ENCODE measurements at regions of chr1 and their contacts with region 1.

Region 1: GRCh38 chr1:26602378-26602959 is 72.9 kb downstream of the RPS6KA1 start:
- DNase-seq: peak; percentile 45
- ATAC-seq: peak; percentile 63
- H3K4me3 Mint-ChIP-seq: no peak overlapping the region
- H3K27ac Mint-ChIP-seq: no peak overlapping the region
- H3K4me1 Mint-ChIP-seq: peaks cover 3% of the 10 kb centered on the region
- H3K27me3 Mint-ChIP-seq: no peaks in the 10 kb centered on the region

Region 2: DNA sequence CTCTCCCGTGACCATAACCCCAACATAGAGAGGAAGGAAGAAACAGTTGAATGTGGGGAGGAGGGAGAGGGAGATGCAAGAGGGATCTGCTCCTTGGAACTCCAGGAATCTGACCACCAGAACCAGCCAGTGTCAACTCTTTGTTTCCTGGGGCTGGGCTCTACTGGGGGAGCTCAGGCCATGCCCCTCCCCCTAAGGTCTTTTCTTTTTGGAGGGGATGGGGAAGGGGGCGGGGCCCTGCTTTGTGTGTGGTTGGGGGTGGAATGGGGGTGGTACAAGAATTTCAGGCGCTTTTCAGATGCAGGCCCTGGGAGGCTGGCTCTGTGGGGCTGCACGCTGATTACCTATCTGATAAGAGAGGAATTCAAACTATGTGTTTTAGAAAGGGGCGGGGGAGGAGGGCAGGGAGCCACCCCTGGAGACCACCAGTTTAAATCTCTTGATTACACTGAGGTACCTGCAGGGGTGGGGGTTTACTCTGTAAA is 183.6 kb before region 1 on chr1:
- CTCF ChIA-PET with region 1: no interaction called
- POLR2A ChIA-PET with region 1: no interaction called
- intact Hi-C with region 1: no loop called
- DNase-seq: no peak
- ATAC-seq: no peak
- H3K4me3 Mint-ChIP-seq: no peak overlapping the region
- H3K27ac Mint-ChIP-seq: no peak overlapping the region
- H3K4me1 Mint-ChIP-seq: no peaks in the 10 kb centered on the region
- H3K27me3 Mint-ChIP-seq: peaks cover 10% of the 10 kb centered on the region

Region 3: DNA sequence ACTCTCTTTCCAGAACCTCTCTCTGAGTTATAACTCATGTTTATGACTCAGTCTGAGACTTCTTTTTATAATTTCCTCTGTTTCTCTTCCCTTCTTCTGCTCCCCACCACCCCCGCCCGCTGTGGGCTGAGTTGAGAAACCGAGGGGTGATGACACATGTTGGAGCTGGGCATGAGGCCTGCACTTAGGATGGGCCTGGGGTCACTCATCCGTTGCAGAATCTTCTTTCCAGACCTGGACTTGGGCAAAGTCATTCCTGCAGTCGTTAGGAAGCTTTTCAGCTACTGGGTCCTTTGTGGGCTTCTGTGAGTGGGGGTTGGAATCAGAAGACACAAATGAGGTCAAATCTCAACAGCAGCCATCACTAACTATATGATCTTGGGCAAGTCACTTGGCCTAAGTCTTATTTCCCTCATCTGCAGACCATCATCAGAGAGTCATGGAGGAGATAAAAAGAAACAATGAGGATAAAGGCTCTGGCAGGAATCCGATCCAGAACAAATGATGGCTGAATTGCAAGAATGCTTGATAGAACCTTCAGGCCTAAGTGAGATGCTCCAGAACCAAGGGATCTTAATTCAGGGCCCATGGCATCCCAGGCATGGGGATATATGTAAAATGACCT is 19.5 kb before region 1 on chr1:
- CTCF ChIA-PET with region 1: interaction called, 12 read pairs
- POLR2A ChIA-PET with region 1: no interaction called
- intact Hi-C with region 1: loop called in 1 of 2 experiments (anchors 2 kb)
- DNase-seq: peak; percentile 93
- ATAC-seq: peak; percentile 55
- H3K4me3 Mint-ChIP-seq: peak overlapping the region; percentile 35
- H3K27ac Mint-ChIP-seq: peak overlapping the region; percentile 95
- H3K4me1 Mint-ChIP-seq: peaks cover 54% of the 10 kb centered on the region
- H3K27me3 Mint-ChIP-seq: no peaks in the 10 kb centered on the region

Region 4: DNA sequence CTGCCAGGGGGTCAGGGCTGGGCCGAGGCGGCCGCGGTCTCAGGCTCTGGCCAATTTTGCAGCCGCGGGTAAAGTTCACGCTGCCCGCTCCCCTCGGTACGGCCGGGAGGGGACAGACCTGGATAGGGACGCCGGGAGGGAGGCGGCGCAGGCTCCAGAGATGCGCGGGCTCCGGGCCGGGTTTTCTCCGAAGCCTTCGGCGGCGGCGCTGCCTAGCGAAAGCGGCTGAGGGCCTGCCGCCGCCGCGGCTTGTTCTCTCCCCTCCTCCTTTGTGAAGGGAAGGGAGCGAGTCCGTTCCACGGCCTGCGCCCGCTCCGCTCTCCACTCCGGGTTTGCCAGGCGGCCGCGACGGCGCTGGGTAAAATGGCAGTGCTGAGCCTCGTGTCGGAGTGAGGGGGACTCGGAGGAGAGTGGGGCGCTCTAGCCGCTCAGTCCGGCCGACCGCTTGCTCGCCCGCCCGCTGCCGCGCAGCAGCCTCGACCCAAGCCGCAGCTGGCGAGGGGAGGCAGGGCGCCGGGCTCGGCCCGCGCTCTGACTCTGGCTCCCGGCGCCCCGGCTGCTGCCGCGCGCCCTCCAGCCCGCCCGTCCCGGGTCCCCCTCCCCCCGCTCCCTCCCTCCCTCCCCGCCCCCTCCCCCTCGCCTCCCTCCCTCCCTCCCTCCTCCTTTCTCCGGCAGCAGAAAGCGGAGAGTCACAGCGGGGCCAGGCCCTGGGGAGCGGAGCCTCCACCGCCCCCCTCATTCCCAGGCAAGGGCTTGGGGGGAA is 93.1 kb after region 1 on chr1 and contains the start of gene ARID1A:
- CTCF ChIA-PET with region 1: interaction called, 15 read pairs
- POLR2A ChIA-PET with region 1: no interaction called
- intact Hi-C with region 1: no loop called
- DNase-seq: peak; percentile 97
- ATAC-seq: peak; percentile 55
- H3K4me3 Mint-ChIP-seq: peak within 1 kb of the TSS; percentile 81
- H3K27ac Mint-ChIP-seq: peak within 1 kb of the TSS; percentile 91
- H3K4me1 Mint-ChIP-seq: peaks cover 30% of the 10 kb centered on the region
- H3K27me3 Mint-ChIP-seq: no peaks in the 10 kb centered on the region
- total RNA-seq, gene ARID1A: 73.1 to 112 TPM

Region 5: GRCh38 chr1:26799479-26800142 is 197.1 kb after region 1 on chr1:
- CTCF ChIA-PET with region 1: interaction called, 18 read pairs
- POLR2A ChIA-PET with region 1: no interaction called
- intact Hi-C with region 1: no loop called
- DNase-seq: peak; percentile 48
- ATAC-seq: peak; percentile 78
- H3K4me3 Mint-ChIP-seq: no peak overlapping the region
- H3K27ac Mint-ChIP-seq: peak overlapping the region; percentile 90
- H3K4me1 Mint-ChIP-seq: peaks cover 37% of the 10 kb centered on the region
- H3K27me3 Mint-ChIP-seq: no peaks in the 10 kb centered on the region

Region 6: GRCh38 chr1:26874896-26875295 is 272.4 kb after region 1 on chr1:
- CTCF ChIA-PET with region 1: interaction called, 13 read pairs
- POLR2A ChIA-PET with region 1: no interaction called
- intact Hi-C with region 1: loop called (anchors 1 to 2 kb)
- DNase-seq: no peak
- ATAC-seq: no peak
- H3K4me3 Mint-ChIP-seq: no peak overlapping the region
- H3K27ac Mint-ChIP-seq: no peak overlapping the region
- H3K4me1 Mint-ChIP-seq: peaks cover 2% of the 10 kb centered on the region
- H3K27me3 Mint-ChIP-seq: no peaks in the 10 kb centered on the region

Measured in activated CD4-positive, alpha-beta T cell treated with anti-CD3 and anti-CD28 coated beads for 36 hours (primary cell).